Cardiac septum (tissue), 1 donor: ENCODE measurements at regions of chr17 and their contacts with region 1.

Region 1: GRCh38 chr17:8125157-8125946 is 1.4 kb upstream of the HES7 start:
- DNase-seq: peak; percentile 86

Region 2: GRCh38 chr17:7931709-7932482 is 193.5 kb before region 1 on chr17 and contains the starts of genes CNTROB and TRAPPC1:
- intact Hi-C with region 1: no loop called
- DNase-seq: peak; percentile 100
- total RNA-seq, gene CNTROB: 12.0 TPM
- total RNA-seq, gene TRAPPC1: 114 TPM

Region 3: DNA sequence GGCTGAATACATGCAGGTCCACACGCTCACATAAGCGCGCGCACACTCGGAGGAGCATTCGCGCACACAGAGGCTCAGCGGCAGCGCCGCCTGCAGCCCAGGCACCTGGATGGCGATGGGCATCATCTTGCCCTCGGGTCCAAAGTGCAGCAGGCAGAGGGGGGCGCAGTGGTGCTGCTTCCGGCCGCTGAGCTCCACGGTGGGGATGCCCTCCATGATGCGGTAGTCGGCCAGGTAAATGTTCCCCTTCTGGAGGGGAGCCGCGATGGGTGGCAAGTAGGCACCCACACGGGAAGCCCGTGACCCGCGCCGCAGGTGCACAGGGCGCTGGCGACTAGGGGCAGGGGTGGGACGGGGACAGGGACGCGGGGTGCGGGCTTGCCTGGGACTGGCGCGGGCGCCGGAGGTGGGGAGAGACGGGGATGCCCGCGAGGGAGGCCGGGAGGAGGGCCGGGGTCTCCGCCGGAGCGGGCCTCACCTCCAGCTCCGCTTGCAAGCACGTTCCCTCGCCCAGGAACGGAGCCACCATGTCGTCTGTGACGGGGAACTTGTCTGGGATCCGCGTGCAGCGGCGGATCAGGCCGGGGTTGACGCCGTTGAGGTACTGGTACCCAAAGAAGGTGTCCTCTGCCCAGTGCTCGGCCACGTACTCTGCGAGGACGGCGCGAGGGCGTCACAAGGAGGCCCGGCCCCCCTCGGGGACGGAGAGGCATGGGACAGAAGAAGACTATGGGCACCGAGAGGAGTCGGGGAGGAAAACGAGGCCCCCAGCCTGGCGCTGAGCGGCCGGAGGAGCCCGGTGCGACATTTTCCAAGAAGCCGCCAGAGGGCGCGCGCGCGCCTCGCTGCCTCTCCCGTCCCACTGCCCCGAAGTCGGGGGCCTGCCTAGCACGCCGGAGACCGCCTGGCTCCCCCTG is 45.8 kb before region 1 on chr17:
- intact Hi-C with region 1: no loop called
- DNase-seq: peak; percentile 88

Region 4: GRCh38 chr17:8138672-8139371 is 13.5 kb after region 1 on chr17:
- intact Hi-C with region 1: loop called (anchors 2 kb)
- DNase-seq: peak; percentile 96

Region 5: GRCh38 chr17:8556074-8556473 is 430.7 kb after region 1 on chr17:
- intact Hi-C with region 1: no loop called
- DNase-seq: no peak